IMR-90 (cell line): ENCODE measurements at regions of chr5 and their contacts with region 1.

Region 1: DNA sequence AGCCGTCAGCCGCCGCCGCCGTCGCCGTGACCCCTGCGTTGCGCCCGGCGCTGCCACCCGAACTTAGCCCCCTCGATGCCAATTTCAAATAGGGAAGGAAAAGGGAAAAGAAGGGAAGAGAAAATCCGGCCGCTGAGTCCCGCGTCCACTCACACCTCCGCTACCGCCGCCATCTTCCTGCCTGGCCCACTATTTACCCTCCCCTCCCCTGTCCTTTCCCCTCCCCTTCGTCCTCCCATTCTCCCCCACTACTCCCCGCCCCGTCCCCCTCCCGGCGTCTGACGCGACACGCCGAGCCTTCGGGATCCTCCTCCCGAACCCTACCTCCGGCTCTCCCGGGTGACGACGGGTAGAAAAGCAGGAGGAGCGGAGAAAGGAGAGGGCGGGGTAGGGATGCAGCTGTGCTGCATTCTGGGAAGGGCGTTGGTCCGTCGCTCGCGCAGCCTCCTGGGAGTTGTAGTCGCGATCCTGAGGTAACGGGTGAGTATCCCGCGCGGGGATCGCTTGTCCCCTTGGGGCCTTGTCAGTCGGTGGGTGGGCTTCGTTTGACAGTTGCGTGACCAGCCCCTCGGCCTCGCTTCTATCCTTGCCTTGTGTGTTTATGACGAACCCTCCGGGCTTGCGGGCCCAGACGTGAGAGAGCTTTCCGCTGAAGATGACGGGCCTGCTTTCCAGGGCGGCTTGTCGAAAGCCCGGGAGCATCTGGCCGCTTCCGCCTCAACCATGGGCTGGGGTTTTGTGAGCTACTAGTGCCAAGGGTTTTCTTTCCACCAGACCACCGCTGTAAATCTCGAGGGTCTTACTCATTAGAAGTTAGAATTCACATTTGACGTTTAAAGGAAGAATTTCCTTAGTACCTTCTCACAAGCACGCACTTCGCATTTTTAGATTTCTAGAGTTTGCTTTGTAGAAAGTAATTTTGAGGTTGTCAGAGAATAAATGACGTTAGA is at the starts of genes CERT1 and POLK:
- DNase-seq: peak; percentile 98
- ATAC-seq: peak; percentile 97
- H3K4me3 ChIP-seq: peak within 1 kb of the TSS; percentile 88
- H3K27ac ChIP-seq: peak within 1 kb of the TSS; percentile 96
- H3K4me1 ChIP-seq: no peaks in the 10 kb centered on the region
- H3K27me3 ChIP-seq: no peaks in the 10 kb centered on the region
- CTCF ChIP-seq: no peak
- POLR2A ChIP-seq: peak; percentile 89
- RAD21 ChIP-seq: no peak
- total RNA-seq, gene CERT1: 7.2 and 10.3 TPM in 2 replicates
- total RNA-seq, gene POLK: 24.4 and 34.2 TPM in 2 replicates

Region 2: DNA sequence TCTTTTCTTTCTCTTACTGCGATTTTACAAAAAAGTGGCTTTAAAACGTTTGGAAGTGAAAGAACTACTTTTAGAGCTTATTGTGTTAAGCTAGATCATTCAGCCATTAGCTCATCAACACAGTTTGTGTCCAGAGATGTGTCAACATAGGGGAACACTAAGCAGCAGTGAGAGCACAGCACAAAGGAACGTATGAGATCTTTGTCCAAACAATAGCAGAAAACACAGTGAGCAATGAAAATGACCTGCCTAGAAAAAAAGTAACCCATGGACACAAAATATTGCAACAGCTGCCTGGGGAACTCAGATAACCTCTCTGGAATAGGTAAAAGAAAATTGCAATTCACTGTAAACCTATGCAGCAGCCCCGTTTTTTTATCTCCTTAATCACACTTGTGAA is 1513.2 kb before region 1 on chr5:
- CTCF ChIA-PET with region 1: no interaction called
- POLR2A ChIA-PET with region 1: no interaction called
- dilution Hi-C with region 1: no loop called
- in situ Hi-C with region 1: no loop called
- intact Hi-C with region 1: no loop called
- DNase-seq: no peak
- ATAC-seq: no peak
- H3K4me3 ChIP-seq: no peak overlapping the region
- H3K27ac ChIP-seq: no peak overlapping the region
- H3K4me1 ChIP-seq: no peaks in the 10 kb centered on the region
- H3K27me3 ChIP-seq: peaks cover 23% of the 10 kb centered on the region
- CTCF ChIP-seq: no peak
- POLR2A ChIP-seq: no peak
- RAD21 ChIP-seq: no peak

Region 3: GRCh38 chr5:75412111-75412990 is 99.4 kb before region 1 on chr5:
- CTCF ChIA-PET with region 1: no interaction called
- POLR2A ChIA-PET with region 1: no interaction called
- dilution Hi-C with region 1: no loop called
- in situ Hi-C with region 1: no loop called
- intact Hi-C with region 1: loop called (anchors 1 kb)
- DNase-seq: peak; percentile 91
- ATAC-seq: peak; percentile 100
- H3K4me3 ChIP-seq: no peak overlapping the region
- H3K27ac ChIP-seq: peak overlapping the region; percentile 20; the same call in 1 of the 2 replicates
- H3K4me1 ChIP-seq: peaks cover 3% of the 10 kb centered on the region
- H3K27me3 ChIP-seq: no peaks in the 10 kb centered on the region
- CTCF ChIP-seq: peak; percentile 16; the same call in 1 of the 2 replicates
- POLR2A ChIP-seq: no peak
- RAD21 ChIP-seq: no peak

Region 4: GRCh38 chr5:75566710-75567309 is 55.1 kb after region 1 on chr5:
- CTCF ChIA-PET with region 1: no interaction called
- POLR2A ChIA-PET with region 1: no interaction called
- dilution Hi-C with region 1: no loop called
- in situ Hi-C with region 1: no loop called
- intact Hi-C with region 1: loop called (anchors 2 kb)
- DNase-seq: peak; percentile 96
- ATAC-seq: peak; percentile 94
- H3K4me3 ChIP-seq: no peak overlapping the region
- H3K27ac ChIP-seq: peak overlapping the region; percentile 70
- H3K4me1 ChIP-seq: peaks cover 9% of the 10 kb centered on the region
- H3K27me3 ChIP-seq: no peaks in the 10 kb centered on the region
- CTCF ChIP-seq: no peak
- POLR2A ChIP-seq: no peak
- RAD21 ChIP-seq: no peak